ENCODE measurements at regions of chr14 and their contacts with region 1.

Region 1: DNA sequence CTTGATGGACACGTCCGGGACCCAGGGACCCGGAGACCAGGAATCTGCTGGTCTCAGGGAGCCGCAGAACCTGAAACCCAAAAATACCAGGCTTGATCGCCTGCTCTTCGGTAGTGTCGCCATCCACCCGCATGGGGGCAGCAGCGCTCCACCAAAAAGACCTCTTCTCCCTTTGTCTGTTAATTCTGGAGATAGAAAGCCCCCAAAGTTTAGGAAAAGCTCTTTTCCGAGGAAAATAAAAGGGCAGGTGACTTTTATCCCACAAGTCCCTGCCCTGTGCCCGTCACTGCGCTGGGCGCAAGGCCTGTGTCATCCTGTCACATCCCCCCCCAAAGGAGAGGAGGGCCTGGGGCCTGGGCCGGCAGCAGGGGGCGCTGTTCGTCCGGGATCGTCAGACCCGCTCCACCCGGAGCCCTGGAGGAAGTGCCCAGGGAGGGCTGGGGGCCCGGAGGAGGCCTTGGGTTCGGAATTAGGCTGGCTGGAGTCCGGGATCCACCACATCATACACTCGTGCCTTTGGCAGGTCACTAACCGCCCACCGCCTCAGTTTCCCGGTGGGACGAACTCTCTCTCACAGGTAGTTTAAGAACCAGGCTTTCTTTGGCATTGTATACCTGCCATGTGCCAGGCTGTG is 31.9 kb downstream of the DAD1 start:
- DNase-seq: peak; percentile 69 to 96 (median 89)
- ATAC-seq: peak; percentile 21 to 38 (median 29)
- H3K4me3 ChIP-seq: peak overlapping the region; percentile 47 to 58
- H3K4me3 Mint-ChIP-seq: peak overlapping the region; percentile 64 to 83 (median 79)
- H3K27ac ChIP-seq: peak overlapping the region; percentile 99
- H3K27ac Mint-ChIP-seq: peak overlapping the region; percentile 98 to 99
- H3K4me1 ChIP-seq: peaks cover 66 to 100% of the 10 kb centered on the region in 2 experiments
- H3K4me1 Mint-ChIP-seq: peaks cover 90 to 96% (median 91%) of the 10 kb centered on the region in 3 donors
- H3K27me3 ChIP-seq: no peaks in the 10 kb centered on the region
- H3K27me3 Mint-ChIP-seq: peaks cover 0 to 2% of the 10 kb centered on the region in 2 donors

Region 2: DNA sequence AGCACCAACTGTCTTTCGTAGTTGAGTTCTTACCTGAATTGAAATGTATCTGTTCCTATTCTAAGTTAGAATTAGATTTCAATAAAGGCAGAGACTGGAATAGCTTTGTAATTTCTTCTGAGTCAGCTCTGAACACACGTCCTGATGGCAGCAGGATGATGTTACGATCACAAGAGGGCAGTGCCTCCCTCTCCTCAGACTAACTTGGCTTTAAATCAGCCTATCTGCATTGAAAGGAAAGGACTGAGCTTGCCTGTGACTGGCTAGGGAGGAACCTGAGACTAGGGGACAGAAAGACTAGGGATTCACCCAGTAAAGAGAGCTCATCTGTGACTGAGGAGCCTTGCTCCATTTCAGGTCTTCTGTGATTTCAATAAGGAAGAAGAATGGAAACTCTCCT is 559.8 kb before region 1 on chr14:
- CTCF ChIA-PET with region 1: interaction called in 1 of 2 experiments, 10 read pairs
- POLR2A ChIA-PET with region 1: no interaction called
- DNase-seq: peak in 24 of 35 experiments; percentile 5 to 70 (median 26)
- ATAC-seq: peak; percentile 85 to 94 (median 90)
- H3K4me3 ChIP-seq: peak overlapping the region; percentile 38 to 48
- H3K4me3 Mint-ChIP-seq: peak overlapping the region; percentile 87 to 90 (median 88)
- H3K27ac ChIP-seq: peak overlapping the region; percentile 38
- H3K27ac Mint-ChIP-seq: peak overlapping the region; percentile 92 to 96
- H3K4me1 ChIP-seq: peaks cover 0 to 6% of the 10 kb centered on the region in 2 experiments
- H3K4me1 Mint-ChIP-seq: peaks cover 4 to 30% (median 13%) of the 10 kb centered on the region in 3 donors
- H3K27me3 ChIP-seq: no peaks in the 10 kb centered on the region
- H3K27me3 Mint-ChIP-seq: peaks cover 0 to 1% of the 10 kb centered on the region in 2 donors

Region 3: DNA sequence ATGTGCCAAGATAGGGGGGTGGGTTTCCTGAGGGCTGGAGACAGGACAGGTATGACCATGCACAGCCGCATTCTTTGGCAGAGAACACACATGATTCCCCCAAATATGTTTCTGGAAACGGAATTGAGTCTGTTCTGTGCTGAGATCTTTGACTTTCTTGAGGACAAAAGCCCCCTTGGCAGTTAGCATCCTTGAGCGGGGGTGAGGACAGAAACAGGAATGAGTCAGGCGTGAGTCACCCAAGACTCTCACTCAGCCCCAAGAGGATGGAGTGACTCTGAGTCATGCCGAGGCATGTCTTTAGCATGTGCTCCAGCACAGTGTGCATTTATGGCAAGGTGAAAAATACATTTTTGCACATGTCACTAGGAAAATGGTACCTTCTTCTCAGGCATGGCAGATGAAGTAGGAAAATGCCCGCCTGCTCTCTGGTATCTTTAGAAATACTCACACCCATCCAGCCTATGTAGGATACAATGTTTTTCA is 20.2 kb before region 1 on chr14:
- CTCF ChIA-PET with region 1: interaction called, 3 to 23 read pairs
- POLR2A ChIA-PET with region 1: interaction called, 6 to 13 read pairs
- DNase-seq: peak in 29 of 35 experiments; percentile 41 to 86 (median 57)
- ATAC-seq: peak; percentile 82 to 93 (median 92)
- H3K4me3 ChIP-seq: peak overlapping the region; percentile 38 to 42
- H3K4me3 Mint-ChIP-seq: peak overlapping the region; percentile 77 to 86 (median 83)
- H3K27ac ChIP-seq: peak overlapping the region; percentile 88
- H3K27ac Mint-ChIP-seq: peak overlapping the region; percentile 98 to 99
- H3K4me1 ChIP-seq: peaks cover 87 to 92% of the 10 kb centered on the region in 2 experiments
- H3K4me1 Mint-ChIP-seq: peaks cover 95 to 96% (median 96%) of the 10 kb centered on the region in 3 donors
- H3K27me3 ChIP-seq: no peaks in the 10 kb centered on the region
- H3K27me3 Mint-ChIP-seq: no peaks in the 10 kb centered on the region

Region 4: GRCh38 chr14:22589096-22589839 is 32.2 kb after region 1 on chr14 and contains the start of gene DAD1:
- CTCF ChIA-PET with region 1: interaction called, 3 to 28 read pairs
- POLR2A ChIA-PET with region 1: interaction called, 5 to 22 read pairs
- DNase-seq: peak; percentile 97 to 100 (median 99)
- ATAC-seq: peak; percentile 93
- H3K4me3 ChIP-seq: peak within 1 kb of the TSS; percentile 88 to 90
- H3K4me3 Mint-ChIP-seq: peak within 1 kb of the TSS; percentile 93 to 99 (median 97)
- H3K27ac ChIP-seq: peak within 1 kb of the TSS; percentile 98
- H3K27ac Mint-ChIP-seq: peak within 1 kb of the TSS; percentile 99 to 100
- H3K4me1 ChIP-seq: peaks cover 25 to 34% of the 10 kb centered on the region in 2 experiments
- H3K4me1 Mint-ChIP-seq: peaks cover 59 to 62% (median 61%) of the 10 kb centered on the region in 3 donors
- H3K27me3 ChIP-seq: peaks cover 0 to 2% of the 10 kb centered on the region in 2 experiments
- H3K27me3 Mint-ChIP-seq: peaks cover 0 to 5% of the 10 kb centered on the region in 2 donors
- total RNA-seq, gene DAD1: 80.9 to 127 (median 113) TPM

Region 5: DNA sequence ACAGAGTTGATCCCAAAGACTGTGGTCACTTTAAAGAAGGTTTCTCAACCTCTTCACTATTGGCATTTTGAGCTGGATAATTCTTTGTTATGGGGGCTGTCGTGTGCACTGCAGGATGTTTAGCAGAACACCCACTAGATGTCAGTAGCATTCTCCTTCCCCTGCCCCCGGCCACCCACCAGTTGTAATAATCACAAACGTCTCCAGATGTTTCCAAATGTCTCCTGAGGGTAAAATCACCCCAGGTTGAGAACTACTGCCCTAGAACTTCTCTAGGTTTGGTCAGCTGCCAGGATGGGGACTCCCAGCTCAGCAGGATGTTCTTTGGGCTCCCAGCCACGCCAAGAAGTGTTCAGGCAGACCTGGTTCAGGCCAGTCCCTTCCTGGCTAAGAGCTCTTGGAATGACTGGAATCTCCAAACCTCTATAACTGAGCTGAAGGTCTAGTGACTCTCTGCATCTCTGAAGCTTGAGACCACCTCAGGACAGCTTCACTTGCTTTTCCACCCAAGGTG is 437.7 kb after region 1 on chr14:
- CTCF ChIA-PET with region 1: no interaction called
- POLR2A ChIA-PET with region 1: no interaction called
- DNase-seq: peak in 10 of 35 experiments; percentile 24 to 62 (median 32)
- ATAC-seq: peak; percentile 69 to 85 (median 75)
- H3K4me3 ChIP-seq: no peak overlapping the region
- H3K4me3 Mint-ChIP-seq: no peak overlapping the region
- H3K27ac ChIP-seq: no peak overlapping the region
- H3K27ac Mint-ChIP-seq: no peak overlapping the region
- H3K4me1 ChIP-seq: peaks cover 0 to 4% of the 10 kb centered on the region in 2 experiments
- H3K4me1 Mint-ChIP-seq: no peaks in the 10 kb centered on the region
- H3K27me3 ChIP-seq: no peaks in the 10 kb centered on the region
- H3K27me3 Mint-ChIP-seq: no peaks in the 10 kb centered on the region

Measured in T-cell (primary cell).